ENCODE measurements at regions of chrX and their contacts with region 1.

Region 1: DNA sequence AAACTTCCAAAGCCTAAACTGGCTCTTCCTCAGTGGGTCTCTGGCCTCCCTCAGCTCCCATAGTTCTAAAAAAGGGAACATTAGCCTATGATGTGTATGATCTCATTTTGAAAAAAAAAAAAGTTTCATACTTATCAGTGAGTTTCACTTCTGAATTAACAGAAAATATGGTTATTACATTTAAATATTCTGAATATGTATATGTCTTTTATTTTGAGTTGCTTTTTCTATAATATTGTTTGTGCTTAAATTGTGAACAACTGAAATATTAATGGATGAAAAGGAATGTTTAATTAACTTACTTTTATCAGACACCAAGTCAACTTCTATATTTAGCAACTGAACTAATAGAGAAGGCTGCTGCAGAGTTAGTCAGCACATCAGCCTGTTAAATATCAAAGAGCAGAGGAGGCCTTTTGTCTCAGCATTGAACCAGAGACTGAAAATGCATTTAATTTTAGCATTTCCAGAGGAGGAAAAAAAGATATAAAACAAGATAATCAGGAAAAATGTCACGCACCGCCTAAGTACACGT is 20.4 kb upstream of the FHL1 start:
- DNase-seq: no peak
- ATAC-seq: peak; percentile 64 to 86 (median 78)
- H3K4me3 ChIP-seq: no peak overlapping the region
- H3K27ac ChIP-seq: peak overlapping the region; percentile 54 to 94 (median 84)
- H3K4me1 ChIP-seq: peaks cover 0 to 21% (median 4%) of the 10 kb centered on the region in 12 donors
- H3K27me3 ChIP-seq: no peaks in the 10 kb centered on the region
- CTCF ChIP-seq: no peak
- POLR2A ChIP-seq: no peak

Region 2: GRCh38 chrX:135951291-135951690 is 175.6 kb before region 1 on chrX:
- intact Hi-C with region 1: no loop called
- DNase-seq: no peak
- ATAC-seq: no peak
- H3K4me3 ChIP-seq: no peak overlapping the region
- H3K27ac ChIP-seq: no peak overlapping the region
- H3K4me1 ChIP-seq: no peaks in the 10 kb centered on the region
- H3K27me3 ChIP-seq: peaks cover 0 to 2% (median 0%) of the 10 kb centered on the region in 9 donors
- CTCF ChIP-seq: no peak
- POLR2A ChIP-seq: no peak

Region 3: GRCh38 chrX:136055651-136056221 is 71.2 kb before region 1 on chrX:
- intact Hi-C with region 1: loop called in 1 of 10 experiments (anchors 10 kb)
- DNase-seq: peak in 2 of 5 donors; percentile 29 to 38
- ATAC-seq: peak; percentile 78 to 92 (median 89)
- H3K4me3 ChIP-seq: peak overlapping the region in 1 of 12 donors; percentile 13
- H3K27ac ChIP-seq: peak overlapping the region in 11 of 12 donors; percentile 0 to 89 (median 59)
- H3K4me1 ChIP-seq: peaks cover 0 to 17% (median 0%) of the 10 kb centered on the region in 12 donors
- H3K27me3 ChIP-seq: no peaks in the 10 kb centered on the region
- CTCF ChIP-seq: no peak
- POLR2A ChIP-seq: no peak

Region 4: GRCh38 chrX:136147315-136147901 is 20.5 kb after region 1 on chrX and contains the start of gene FHL1:
- intact Hi-C with region 1: no loop called
- DNase-seq: peak; percentile 75 to 84 (median 77)
- ATAC-seq: peak; percentile 80 to 95 (median 90)
- H3K4me3 ChIP-seq: peak within 1 kb of the TSS; percentile 58 to 97 (median 76)
- H3K27ac ChIP-seq: peak within 1 kb of the TSS; percentile 71 to 98 (median 90)
- H3K4me1 ChIP-seq: peaks cover 0 to 16% (median 3%) of the 10 kb centered on the region in 12 donors
- H3K27me3 ChIP-seq: peaks cover 0 to 24% (median 0%) of the 10 kb centered on the region in 9 donors
- CTCF ChIP-seq: no peak
- POLR2A ChIP-seq: peak in 1 of 2 donors; percentile 67
- total RNA-seq, gene FHL1: 1,446 to 4,800 (median 2,127) TPM

Region 5: DNA sequence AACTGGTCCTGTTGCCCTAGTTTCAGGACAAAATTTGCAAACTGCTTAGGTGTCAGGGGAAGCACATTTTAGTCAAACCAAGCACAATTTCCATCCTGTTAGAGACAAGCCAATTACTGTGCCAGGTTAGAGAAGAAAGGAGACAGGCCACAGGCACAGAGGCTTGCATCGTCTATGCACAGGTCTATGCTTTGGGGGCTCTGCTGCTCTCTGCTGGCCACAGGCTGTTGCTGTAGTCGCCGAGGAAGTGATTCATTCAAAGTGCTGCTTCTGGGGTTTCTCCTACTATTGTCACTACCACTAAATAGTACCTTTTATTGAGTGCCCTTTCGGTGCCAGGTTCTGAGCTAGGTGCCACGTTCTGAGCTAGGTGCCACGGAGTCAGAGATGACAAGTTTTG is 450.6 kb after region 1 on chrX:
- intact Hi-C with region 1: no loop called
- DNase-seq: peak; percentile 12 to 59 (median 52)
- ATAC-seq: peak; percentile 67 to 91 (median 82)
- H3K4me3 ChIP-seq: no peak overlapping the region
- H3K27ac ChIP-seq: no peak overlapping the region
- H3K4me1 ChIP-seq: peaks cover 0 to 12% (median 2%) of the 10 kb centered on the region in 12 donors
- H3K27me3 ChIP-seq: peaks cover 0 to 7% (median 0%) of the 10 kb centered on the region in 9 donors
- CTCF ChIP-seq: peak; percentile 38 to 73 (median 54)
- POLR2A ChIP-seq: no peak